GM12878 (cell line): ENCODE measurements at regions of chr1 and their contacts with region 1.

Region 1: GRCh38 chr1:76901158-76901767 is 34.0 kb downstream of the ST6GALNAC5 start:
- DNase-seq: peak; percentile 9
- ATAC-seq: peak; percentile 99
- H3K4me3 ChIP-seq: no peak overlapping the region
- H3K27ac ChIP-seq: no peak overlapping the region
- H3K4me1 ChIP-seq: no peaks in the 10 kb centered on the region
- H3K27me3 ChIP-seq: no peaks in the 10 kb centered on the region
- CTCF ChIP-seq: peak; percentile 72 to 80 (median 78)
- EP300 ChIP-seq: no peak
- POLR2A ChIP-seq: no peak
- RAD21 ChIP-seq: peak; percentile 71

Region 2: GRCh38 chr1:76843821-76844448 is 57.3 kb before region 1 on chr1:
- CTCF ChIA-PET with region 1: no interaction called
- POLR2A ChIA-PET with region 1: no interaction called
- RAD21 ChIA-PET with region 1: no interaction called
- SMC1A ChIA-PET with region 1: no interaction called
- in situ Hi-C with region 1: no loop called
- intact Hi-C with region 1: no loop called
- DNase-seq: no peak
- ATAC-seq: peak; percentile 78
- H3K4me3 ChIP-seq: no peak overlapping the region
- H3K27ac ChIP-seq: no peak overlapping the region
- H3K4me1 ChIP-seq: no peaks in the 10 kb centered on the region
- H3K27me3 ChIP-seq: no peaks in the 10 kb centered on the region
- CTCF ChIP-seq: no peak
- EP300 ChIP-seq: no peak
- POLR2A ChIP-seq: no peak
- RAD21 ChIP-seq: no peak

Region 3: GRCh38 chr1:76919085-76919484 is 17.8 kb after region 1 on chr1:
- CTCF ChIA-PET with region 1: no interaction called
- POLR2A ChIA-PET with region 1: interaction called, 3 read pairs
- RAD21 ChIA-PET with region 1: no interaction called
- SMC1A ChIA-PET with region 1: interaction called, 20 read pairs
- in situ Hi-C with region 1: no loop called
- intact Hi-C with region 1: no loop called
- DNase-seq: no peak
- ATAC-seq: peak; percentile 10; the same call in 1 of the 3 replicates
- H3K4me3 ChIP-seq: no peak overlapping the region
- H3K27ac ChIP-seq: no peak overlapping the region
- H3K4me1 ChIP-seq: no peaks in the 10 kb centered on the region
- H3K27me3 ChIP-seq: no peaks in the 10 kb centered on the region
- CTCF ChIP-seq: no peak
- EP300 ChIP-seq: no peak
- POLR2A ChIP-seq: no peak
- RAD21 ChIP-seq: no peak

Region 4: GRCh38 chr1:76955652-76956051 is 54.4 kb after region 1 on chr1:
- CTCF ChIA-PET with region 1: no interaction called
- POLR2A ChIA-PET with region 1: no interaction called
- RAD21 ChIA-PET with region 1: no interaction called
- SMC1A ChIA-PET with region 1: no interaction called
- in situ Hi-C with region 1: no loop called
- intact Hi-C with region 1: no loop called
- DNase-seq: no peak
- ATAC-seq: no peak
- H3K4me3 ChIP-seq: no peak overlapping the region
- H3K27ac ChIP-seq: no peak overlapping the region
- H3K4me1 ChIP-seq: no peaks in the 10 kb centered on the region
- H3K27me3 ChIP-seq: no peaks in the 10 kb centered on the region
- CTCF ChIP-seq: no peak
- EP300 ChIP-seq: no peak
- POLR2A ChIP-seq: no peak
- RAD21 ChIP-seq: no peak

Region 5: GRCh38 chr1:77126307-77126706 is 225.0 kb after region 1 on chr1:
- CTCF ChIA-PET with region 1: interaction called, 6 read pairs
- POLR2A ChIA-PET with region 1: no interaction called
- RAD21 ChIA-PET with region 1: interaction called, 5 read pairs
- SMC1A ChIA-PET with region 1: interaction called, 8 read pairs
- in situ Hi-C with region 1: no loop called
- intact Hi-C with region 1: loop called (anchors 1 kb)
- DNase-seq: no peak
- ATAC-seq: peak; percentile 91
- H3K4me3 ChIP-seq: no peak overlapping the region
- H3K27ac ChIP-seq: no peak overlapping the region
- H3K4me1 ChIP-seq: no peaks in the 10 kb centered on the region
- H3K27me3 ChIP-seq: no peaks in the 10 kb centered on the region
- CTCF ChIP-seq: peak; percentile 46 to 76 (median 49); a peak in 5 of 6 replicates
- EP300 ChIP-seq: no peak
- POLR2A ChIP-seq: no peak
- RAD21 ChIP-seq: peak; percentile 81